MCF 10A (cell line): ENCODE measurements at regions of chr3 and their contacts with region 1.

Region 1: GRCh38 chr3:39447637-39448483 is 19.6 kb upstream of the MOBP start:
- DNase-seq: peak; percentile 90
- H3K4me3 Mint-ChIP-seq: no peak overlapping the region
- H3K27ac Mint-ChIP-seq: no peak overlapping the region
- H3K4me1 Mint-ChIP-seq: peaks cover 7% of the 10 kb centered on the region
- H3K27me3 Mint-ChIP-seq: peaks cover under 1% of the 10 kb centered on the region
- CTCF ChIP-seq: peak; percentile 67

Region 2: DNA sequence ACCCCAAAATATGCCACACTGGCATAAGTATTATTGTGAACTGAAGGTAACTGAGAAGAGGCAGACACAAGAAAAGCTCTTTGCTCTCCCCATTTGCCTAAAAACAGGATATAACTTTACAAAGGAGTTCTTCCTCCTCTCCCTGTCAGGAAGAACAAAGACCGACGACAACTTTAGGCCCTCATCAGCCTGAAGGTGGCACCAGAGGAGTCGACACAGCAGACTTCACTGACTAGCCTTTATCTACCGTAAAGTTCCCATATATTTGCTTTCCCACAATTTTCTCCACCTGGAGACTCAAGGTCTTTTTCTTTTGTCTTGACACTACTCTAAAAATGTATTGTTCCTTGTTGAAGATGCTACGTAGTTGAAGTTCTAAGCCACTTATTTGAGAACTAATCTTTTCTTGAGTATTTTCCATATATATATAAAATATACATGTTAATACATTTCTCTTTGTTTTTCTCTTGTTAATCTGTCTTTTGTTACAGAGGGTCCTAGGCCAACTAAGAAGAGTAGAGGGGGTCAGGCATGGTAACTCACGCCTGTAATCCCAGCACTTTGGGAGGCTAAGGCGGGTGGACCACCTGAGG is 239.3 kb before region 1 on chr3:
- CTCF ChIA-PET with region 1: no interaction called
- POLR2A ChIA-PET with region 1: no interaction called
- intact Hi-C with region 1: no loop called
- DNase-seq: peak; percentile 67
- H3K4me3 Mint-ChIP-seq: no peak overlapping the region
- H3K27ac Mint-ChIP-seq: no peak overlapping the region
- H3K4me1 Mint-ChIP-seq: no peaks in the 10 kb centered on the region
- H3K27me3 Mint-ChIP-seq: peaks cover 38% of the 10 kb centered on the region
- CTCF ChIP-seq: peak; percentile 39

Region 3: GRCh38 chr3:39414421-39414907 is 33.4 kb before region 1 on chr3:
- CTCF ChIA-PET with region 1: interaction called, 19 read pairs
- POLR2A ChIA-PET with region 1: interaction called, 4 read pairs
- intact Hi-C with region 1: no loop called
- DNase-seq: peak; percentile 27
- H3K4me3 Mint-ChIP-seq: no peak overlapping the region
- H3K27ac Mint-ChIP-seq: no peak overlapping the region
- H3K4me1 Mint-ChIP-seq: peaks cover 21% of the 10 kb centered on the region
- H3K27me3 Mint-ChIP-seq: no peaks in the 10 kb centered on the region
- CTCF ChIP-seq: no peak

Region 4: DNA sequence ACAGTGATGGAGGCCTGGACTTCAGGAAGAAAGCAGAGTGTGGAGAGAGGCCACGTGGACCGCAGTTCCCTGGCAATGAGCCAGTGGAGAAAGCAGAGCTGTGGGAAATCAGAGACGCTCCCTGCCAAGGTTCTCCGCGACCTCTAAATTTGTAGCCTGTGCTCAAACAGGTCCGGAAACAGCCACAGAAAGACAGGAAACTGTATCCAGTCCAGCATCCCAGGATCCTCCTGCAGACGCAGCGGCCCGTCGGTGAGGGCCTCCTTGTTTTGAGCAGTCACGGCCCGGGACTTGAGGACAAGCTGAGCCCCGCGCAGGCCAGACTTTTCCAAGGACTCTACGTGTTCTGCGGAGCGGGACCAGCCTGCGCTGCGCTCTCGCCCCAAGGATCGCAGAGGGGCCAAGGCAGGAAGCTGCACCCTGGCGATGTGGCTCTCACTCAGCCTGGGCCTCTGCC is 19.1 kb before region 1 on chr3:
- CTCF ChIA-PET with region 1: interaction called, 24 read pairs
- POLR2A ChIA-PET with region 1: no interaction called
- intact Hi-C with region 1: no loop called
- DNase-seq: no peak
- H3K4me3 Mint-ChIP-seq: no peak overlapping the region
- H3K27ac Mint-ChIP-seq: no peak overlapping the region
- H3K4me1 Mint-ChIP-seq: peaks cover 2% of the 10 kb centered on the region
- H3K27me3 Mint-ChIP-seq: no peaks in the 10 kb centered on the region
- CTCF ChIP-seq: no peak

Region 5: GRCh38 chr3:39479701-39480414 is 32.0 kb after region 1 on chr3:
- CTCF ChIA-PET with region 1: interaction called, 15 read pairs
- POLR2A ChIA-PET with region 1: no interaction called
- intact Hi-C with region 1: no loop called
- DNase-seq: no peak
- H3K4me3 Mint-ChIP-seq: no peak overlapping the region
- H3K27ac Mint-ChIP-seq: no peak overlapping the region
- H3K4me1 Mint-ChIP-seq: no peaks in the 10 kb centered on the region
- H3K27me3 Mint-ChIP-seq: no peaks in the 10 kb centered on the region
- CTCF ChIP-seq: no peak

Region 6: DNA sequence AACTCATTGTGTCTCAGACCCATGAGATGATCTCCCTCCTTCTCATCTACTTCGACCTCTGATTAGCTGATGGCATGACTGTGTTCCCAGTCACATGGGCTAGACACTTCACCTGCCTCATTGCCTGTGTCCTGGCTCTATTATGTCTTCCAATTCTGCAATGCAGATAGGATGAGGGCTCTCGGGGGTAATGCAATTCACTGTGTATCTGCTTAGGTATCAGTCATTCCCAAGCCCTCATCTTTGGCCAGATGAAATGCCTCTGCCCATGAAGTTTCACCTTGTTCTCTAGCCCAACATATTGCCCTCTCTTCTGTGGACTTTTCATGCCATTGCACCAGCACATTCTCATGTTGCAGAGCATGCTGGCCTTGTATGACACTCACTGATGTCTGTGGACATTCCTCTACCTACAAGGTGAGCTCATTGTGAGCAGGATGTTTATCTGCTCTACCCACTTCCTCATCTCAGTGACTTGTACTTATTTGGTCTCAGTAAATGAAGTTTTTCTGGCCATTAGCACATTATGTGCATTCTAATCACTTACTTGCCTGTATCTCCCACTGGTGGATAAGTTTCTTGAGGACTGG is 51.9 kb after region 1 on chr3:
- CTCF ChIA-PET with region 1: interaction called, 100 read pairs
- POLR2A ChIA-PET with region 1: interaction called, 3 read pairs
- intact Hi-C with region 1: loop called (anchors 1 kb)
- DNase-seq: no peak
- H3K4me3 Mint-ChIP-seq: no peak overlapping the region
- H3K27ac Mint-ChIP-seq: no peak overlapping the region
- H3K4me1 Mint-ChIP-seq: peaks cover 6% of the 10 kb centered on the region
- H3K27me3 Mint-ChIP-seq: peaks cover 45% of the 10 kb centered on the region
- CTCF ChIP-seq: no peak

Region 7: DNA sequence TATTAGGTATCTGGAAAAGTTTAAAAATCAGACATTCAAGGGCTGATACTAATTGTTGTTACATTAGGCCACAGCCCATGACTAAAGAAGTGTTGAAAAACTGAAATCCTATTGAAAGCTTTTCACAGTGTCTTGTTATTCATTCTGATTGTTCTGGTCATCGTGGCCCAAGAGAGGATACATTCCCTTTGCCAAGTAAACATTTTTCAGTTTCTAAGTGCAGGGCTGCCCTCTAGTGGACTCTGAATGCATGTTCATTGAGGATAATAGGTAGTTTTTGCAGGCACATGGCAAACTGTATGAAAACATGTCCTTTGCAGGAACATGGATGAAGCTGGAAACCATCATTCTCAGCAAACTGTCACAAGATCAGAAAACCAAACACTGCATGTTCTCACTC is 542.7 kb after region 1 on chr3:
- CTCF ChIA-PET with region 1: no interaction called
- POLR2A ChIA-PET with region 1: no interaction called
- intact Hi-C with region 1: loop called (anchors 2 kb)
- DNase-seq: peak; percentile 80
- H3K4me3 Mint-ChIP-seq: no peak overlapping the region
- H3K27ac Mint-ChIP-seq: no peak overlapping the region
- H3K4me1 Mint-ChIP-seq: no peaks in the 10 kb centered on the region
- H3K27me3 Mint-ChIP-seq: no peaks in the 10 kb centered on the region
- CTCF ChIP-seq: peak; percentile 68